Activated CD4-positive, alpha-beta T cell treated with anti-CD3 and anti-CD28 coated beads for 36 hours (primary cell): ENCODE measurements at regions of chr22 and their contacts with region 1.

Region 1: DNA sequence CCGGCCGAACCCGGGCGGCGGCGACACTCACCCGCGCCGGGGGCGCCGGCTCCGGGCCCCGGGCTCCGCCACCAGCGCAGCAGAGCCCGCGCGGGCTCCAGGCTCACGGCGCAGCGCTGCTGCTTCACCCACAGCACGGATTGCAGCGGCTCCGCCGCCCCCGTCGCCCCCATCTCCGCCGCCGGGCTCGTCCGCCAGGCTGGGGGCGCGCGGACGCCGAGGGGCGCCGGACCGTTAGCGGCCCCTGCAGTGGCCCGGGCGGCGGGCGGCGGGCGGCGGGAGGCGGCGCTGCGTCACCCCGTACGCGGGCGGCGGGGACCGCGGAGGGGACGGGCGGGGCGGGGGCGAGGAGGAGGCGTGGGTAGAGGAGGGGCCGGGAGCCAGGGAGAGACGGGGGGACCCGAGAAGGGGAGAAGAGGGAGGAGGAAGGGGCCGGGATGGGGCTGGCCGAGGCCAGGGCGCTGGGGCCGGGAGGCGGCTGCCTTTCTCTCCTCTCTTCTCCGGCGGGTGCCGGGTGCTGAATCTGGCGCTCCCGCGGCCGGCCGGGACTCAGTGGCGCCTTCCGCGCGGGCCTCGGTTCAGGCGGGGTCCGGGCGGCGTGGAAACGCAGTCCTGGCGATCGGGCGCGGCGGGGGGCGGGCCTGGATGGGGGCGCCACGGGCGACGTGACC is at the start of gene CERK:
- DNase-seq: peak; percentile 76
- ATAC-seq: peak; percentile 24
- H3K4me3 Mint-ChIP-seq: peak within 1 kb of the TSS; percentile 99
- H3K27ac Mint-ChIP-seq: peak within 1 kb of the TSS; percentile 97
- H3K4me1 Mint-ChIP-seq: peaks cover 39% of the 10 kb centered on the region
- H3K27me3 Mint-ChIP-seq: no peaks in the 10 kb centered on the region
- total RNA-seq, gene CERK: 27.0 to 32.8 TPM

Region 2: DNA sequence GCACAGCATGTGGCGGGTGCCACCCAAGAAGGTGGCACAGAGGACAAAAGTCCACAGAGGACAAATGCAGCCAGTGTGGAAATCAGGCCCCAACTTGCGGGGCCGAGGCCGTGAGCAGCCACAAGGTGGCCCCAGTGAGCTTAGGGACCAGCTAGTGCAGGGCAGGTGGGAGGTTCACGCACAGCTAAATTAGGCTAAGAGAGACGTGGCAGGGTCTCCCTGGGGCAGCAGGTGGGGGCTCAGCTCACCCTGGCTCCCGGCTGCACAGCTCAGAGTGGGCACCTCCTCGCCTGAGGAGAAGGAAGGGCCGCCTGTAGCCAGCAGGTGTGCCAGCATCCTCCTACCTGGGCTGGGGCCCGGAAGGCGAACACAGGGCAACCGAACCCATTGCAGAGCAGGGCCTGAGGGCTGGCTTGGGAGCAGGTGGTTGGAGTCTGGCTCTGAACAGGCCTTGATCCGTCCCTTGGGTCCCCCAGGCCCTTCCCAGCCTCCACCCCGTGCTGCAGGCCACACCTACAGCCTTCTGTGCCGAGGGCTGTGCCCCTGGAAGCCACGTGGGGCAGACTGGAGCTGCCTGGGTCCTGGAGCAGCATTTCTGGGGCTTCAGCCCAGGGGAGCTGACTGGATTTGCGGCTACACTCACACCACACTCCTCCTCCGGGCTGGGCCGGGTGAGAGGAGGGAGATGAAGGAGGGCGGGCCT is 174.6 kb before region 1 on chr22:
- CTCF ChIA-PET with region 1: interaction called, 6 read pairs
- POLR2A ChIA-PET with region 1: no interaction called
- intact Hi-C with region 1: loop called (anchors 1 to 5 kb)
- DNase-seq: peak; percentile 90
- ATAC-seq: peak; percentile 87
- H3K4me3 Mint-ChIP-seq: peak overlapping the region; percentile 33
- H3K27ac Mint-ChIP-seq: peak overlapping the region; percentile 51
- H3K4me1 Mint-ChIP-seq: peaks cover 9% of the 10 kb centered on the region
- H3K27me3 Mint-ChIP-seq: no peaks in the 10 kb centered on the region

Region 3: DNA sequence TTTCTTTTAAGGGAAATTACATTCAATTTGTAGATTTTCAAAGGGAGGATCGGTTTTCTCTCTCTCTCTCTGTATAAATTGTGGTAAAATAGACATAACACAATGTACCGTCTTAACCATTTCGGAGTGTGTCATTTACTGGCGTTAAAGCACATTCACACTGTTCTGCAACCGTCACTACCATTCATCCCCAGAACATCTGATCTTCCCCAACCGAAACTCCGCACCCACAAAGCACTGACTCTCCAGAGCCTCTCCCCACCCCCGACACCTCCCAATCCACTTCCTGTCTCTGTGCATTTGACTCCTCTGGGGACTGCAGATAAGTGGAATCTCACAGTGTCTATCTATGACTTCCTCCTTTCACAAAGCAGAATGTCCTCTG is 133.8 kb before region 1 on chr22:
- CTCF ChIA-PET with region 1: no interaction called
- POLR2A ChIA-PET with region 1: no interaction called
- intact Hi-C with region 1: loop called in 1 of 2 experiments (anchors 5 kb)
- DNase-seq: peak; percentile 91
- ATAC-seq: peak; percentile 99
- H3K4me3 Mint-ChIP-seq: peak overlapping the region; percentile 64
- H3K27ac Mint-ChIP-seq: peak overlapping the region; percentile 99
- H3K4me1 Mint-ChIP-seq: peaks cover 16% of the 10 kb centered on the region
- H3K27me3 Mint-ChIP-seq: no peaks in the 10 kb centered on the region

Region 4: DNA sequence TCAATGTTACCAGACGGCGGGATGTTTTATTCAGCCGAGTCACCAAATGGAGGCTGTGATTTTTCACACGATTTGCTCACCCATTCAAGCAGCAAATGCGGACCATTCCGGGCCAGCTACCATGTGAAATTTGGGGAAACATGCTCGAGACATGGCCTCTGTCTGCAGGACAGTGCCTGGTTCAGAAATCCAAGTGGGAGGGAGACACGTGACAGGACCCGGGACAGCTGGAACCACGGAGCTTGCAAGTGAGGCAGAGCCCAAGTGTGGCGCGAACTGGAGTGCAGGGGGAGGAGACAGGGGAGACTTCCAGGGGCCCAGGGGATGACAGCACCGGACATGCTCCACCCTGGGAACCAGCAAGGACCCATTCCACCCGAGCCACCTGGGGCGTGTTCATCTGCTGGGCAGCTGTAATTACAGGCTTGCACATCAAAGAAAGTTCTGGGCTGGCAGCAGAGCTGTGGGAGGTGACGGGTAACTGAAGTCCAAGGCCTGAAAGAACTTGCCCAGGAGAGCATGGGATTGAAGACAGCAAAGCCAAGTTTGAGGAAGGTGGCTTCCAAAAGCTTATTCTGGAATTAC is 16.5 kb before region 1 on chr22:
- CTCF ChIA-PET with region 1: no interaction called
- POLR2A ChIA-PET with region 1: no interaction called
- intact Hi-C with region 1: no loop called
- DNase-seq: no peak
- ATAC-seq: no peak
- H3K4me3 Mint-ChIP-seq: no peak overlapping the region
- H3K27ac Mint-ChIP-seq: no peak overlapping the region
- H3K4me1 Mint-ChIP-seq: peaks cover 6% of the 10 kb centered on the region
- H3K27me3 Mint-ChIP-seq: no peaks in the 10 kb centered on the region

Region 5: GRCh38 chr22:46762238-46763050 is 24.3 kb after region 1 on chr22 and contains the start of gene TBC1D22A:
- CTCF ChIA-PET with region 1: interaction called, 14 read pairs
- POLR2A ChIA-PET with region 1: interaction called, 5 read pairs
- intact Hi-C with region 1: loop called (anchors 1 to 2 kb)
- DNase-seq: peak; percentile 97
- ATAC-seq: peak; percentile 90
- H3K4me3 Mint-ChIP-seq: peak within 1 kb of the TSS; percentile 94
- H3K27ac Mint-ChIP-seq: peak within 1 kb of the TSS; percentile 99
- H3K4me1 Mint-ChIP-seq: peaks cover 58% of the 10 kb centered on the region
- H3K27me3 Mint-ChIP-seq: no peaks in the 10 kb centered on the region
- total RNA-seq, gene TBC1D22A: 36.0 to 38.0 TPM

Region 6: GRCh38 chr22:46803031-46803880 is 65.1 kb after region 1 on chr22:
- CTCF ChIA-PET with region 1: interaction called, 16 read pairs
- POLR2A ChIA-PET with region 1: interaction called, 3 read pairs
- intact Hi-C with region 1: loop called (anchors 1 to 2 kb)
- DNase-seq: peak; percentile 84
- ATAC-seq: peak; percentile 72
- H3K4me3 Mint-ChIP-seq: no peak overlapping the region
- H3K27ac Mint-ChIP-seq: no peak overlapping the region
- H3K4me1 Mint-ChIP-seq: peaks cover 32% of the 10 kb centered on the region
- H3K27me3 Mint-ChIP-seq: no peaks in the 10 kb centered on the region

Region 7: GRCh38 chr22:46929046-46929709 is 191.1 kb after region 1 on chr22:
- CTCF ChIA-PET with region 1: no interaction called
- POLR2A ChIA-PET with region 1: no interaction called
- intact Hi-C with region 1: no loop called
- DNase-seq: no peak
- ATAC-seq: no peak
- H3K4me3 Mint-ChIP-seq: no peak overlapping the region
- H3K27ac Mint-ChIP-seq: no peak overlapping the region
- H3K4me1 Mint-ChIP-seq: peaks cover 4% of the 10 kb centered on the region
- H3K27me3 Mint-ChIP-seq: no peaks in the 10 kb centered on the region